Right cardiac atrium (tissue), 5 donors: ENCODE measurements at regions of chr11 and their contacts with region 1.

Region 1: GRCh38 chr11:35822815-35823495 is 120.9 kb upstream of the LDLRAD3 start:
- DNase-seq: no peak
- ATAC-seq: no peak
- H3K4me3 ChIP-seq: no peak overlapping the region
- H3K27ac ChIP-seq: no peak overlapping the region
- H3K4me1 ChIP-seq: no peaks in the 10 kb centered on the region
- H3K27me3 ChIP-seq: no peaks in the 10 kb centered on the region

Region 2: DNA sequence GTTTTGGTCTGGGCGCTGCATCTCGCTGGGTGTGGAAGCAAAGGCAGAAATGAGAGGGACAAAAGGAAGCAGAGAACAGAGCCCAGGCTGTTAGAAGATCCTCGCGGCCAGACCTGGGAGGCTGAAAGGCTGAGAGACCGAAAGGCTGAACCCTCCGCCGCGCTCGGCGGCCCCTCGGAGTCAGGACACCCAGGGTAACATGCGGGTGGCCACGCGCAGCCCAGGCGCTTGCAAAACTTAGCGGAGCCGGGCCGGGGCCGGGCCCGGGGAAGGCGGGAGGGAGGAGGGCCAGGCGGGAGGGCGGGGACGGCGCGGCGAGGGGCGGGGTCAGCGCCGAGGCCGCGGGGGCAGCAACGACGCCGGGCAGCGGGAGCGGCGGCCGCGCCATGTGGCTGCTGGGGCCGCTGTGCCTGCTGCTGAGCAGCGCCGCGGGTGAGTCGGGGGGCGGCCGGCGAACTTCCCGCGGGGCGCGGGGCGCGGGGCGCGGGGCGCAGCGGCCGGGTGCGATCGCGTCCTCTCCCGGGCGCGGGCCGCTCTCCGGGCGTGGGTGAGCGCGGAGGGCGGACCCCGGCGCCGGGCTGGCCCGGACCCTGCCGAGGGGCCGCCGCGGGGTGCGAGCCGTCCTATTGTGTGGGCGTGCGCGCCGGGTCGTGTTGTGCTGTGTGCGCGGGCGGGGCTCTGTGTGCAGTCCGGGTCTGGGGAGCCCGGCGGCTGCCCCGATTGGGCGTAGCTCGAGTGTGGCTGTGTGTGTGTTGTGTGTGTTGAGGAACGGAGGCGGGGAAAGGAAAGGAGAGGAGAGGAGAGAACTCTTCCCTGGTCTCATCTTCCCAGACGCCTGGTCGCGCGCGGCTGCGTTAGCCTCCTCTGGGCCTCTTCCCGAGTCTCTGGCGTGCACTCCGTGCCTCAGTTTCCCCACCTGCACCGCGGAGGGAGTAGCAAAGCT is 121.0 kb after region 1 on chr11 and contains the start of gene LDLRAD3:
- intact Hi-C with region 1: no loop called
- DNase-seq: peak; percentile 87 to 91 (median 91)
- ATAC-seq: peak; percentile 93 to 95
- H3K4me3 ChIP-seq: peak within 1 kb of the TSS; percentile 84
- H3K27ac ChIP-seq: no peak within 1 kb of the TSS
- H3K4me1 ChIP-seq: no peaks in the 10 kb centered on the region
- H3K27me3 ChIP-seq: no peaks in the 10 kb centered on the region
- total RNA-seq, gene LDLRAD3: 3.0 to 7.0 (median 3.6) TPM

Region 3: DNA sequence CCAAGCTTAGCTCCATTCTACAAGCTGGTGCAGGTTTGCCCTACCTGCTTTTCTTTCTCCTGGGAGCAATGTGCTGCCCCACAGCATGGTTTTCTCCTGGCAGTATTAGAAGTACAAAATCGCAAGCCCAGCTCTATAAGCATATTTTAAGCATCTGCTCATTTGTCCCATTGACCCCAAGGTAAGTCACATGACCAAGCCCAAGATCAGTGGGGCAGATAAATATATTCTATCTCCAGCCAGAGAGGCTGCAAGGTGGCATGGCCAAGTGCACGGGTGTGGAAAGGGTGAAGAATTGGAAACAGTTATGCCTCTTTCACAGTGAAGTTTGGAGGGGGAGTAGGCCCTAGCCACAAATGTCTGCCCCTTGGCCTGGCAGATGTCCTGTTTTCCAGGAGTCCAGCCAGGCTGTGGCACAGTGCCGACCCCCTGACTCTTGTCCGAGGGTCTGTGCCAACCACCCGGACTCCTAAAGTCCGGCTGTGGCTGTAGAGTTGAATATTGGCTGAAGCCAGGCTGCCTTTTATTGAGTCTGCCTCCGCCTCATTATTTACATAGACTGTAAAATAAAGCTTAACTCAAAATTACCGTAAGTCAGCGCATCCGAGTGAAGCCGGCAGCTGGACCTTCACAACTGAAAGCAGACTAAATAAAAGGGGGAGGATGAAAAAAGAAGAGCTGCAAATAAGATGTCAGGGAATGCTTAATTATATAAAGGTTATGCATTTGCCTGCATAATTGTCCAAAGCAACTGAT is 300.6 kb after region 1 on chr11:
- intact Hi-C with region 1: loop called in 1 of 4 experiments (anchors 10 kb)
- DNase-seq: peak in 1 of 3 donors; percentile 63
- ATAC-seq: peak in 1 of 2 donors; percentile 38
- H3K4me3 ChIP-seq: no peak overlapping the region
- H3K27ac ChIP-seq: no peak overlapping the region
- H3K4me1 ChIP-seq: no peaks in the 10 kb centered on the region
- H3K27me3 ChIP-seq: no peaks in the 10 kb centered on the region

Region 4: GRCh38 chr11:36265793-36266628 is 443.1 kb after region 1 on chr11:
- intact Hi-C with region 1: loop called in 1 of 4 experiments (anchors 10 kb)
- DNase-seq: peak; percentile 34 to 72 (median 64)
- ATAC-seq: peak; percentile 66 to 82
- H3K4me3 ChIP-seq: no peak overlapping the region
- H3K27ac ChIP-seq: no peak overlapping the region
- H3K4me1 ChIP-seq: no peaks in the 10 kb centered on the region
- H3K27me3 ChIP-seq: no peaks in the 10 kb centered on the region